ENCODE measurements at regions of chr14 and their contacts with region 1.

Region 1: DNA sequence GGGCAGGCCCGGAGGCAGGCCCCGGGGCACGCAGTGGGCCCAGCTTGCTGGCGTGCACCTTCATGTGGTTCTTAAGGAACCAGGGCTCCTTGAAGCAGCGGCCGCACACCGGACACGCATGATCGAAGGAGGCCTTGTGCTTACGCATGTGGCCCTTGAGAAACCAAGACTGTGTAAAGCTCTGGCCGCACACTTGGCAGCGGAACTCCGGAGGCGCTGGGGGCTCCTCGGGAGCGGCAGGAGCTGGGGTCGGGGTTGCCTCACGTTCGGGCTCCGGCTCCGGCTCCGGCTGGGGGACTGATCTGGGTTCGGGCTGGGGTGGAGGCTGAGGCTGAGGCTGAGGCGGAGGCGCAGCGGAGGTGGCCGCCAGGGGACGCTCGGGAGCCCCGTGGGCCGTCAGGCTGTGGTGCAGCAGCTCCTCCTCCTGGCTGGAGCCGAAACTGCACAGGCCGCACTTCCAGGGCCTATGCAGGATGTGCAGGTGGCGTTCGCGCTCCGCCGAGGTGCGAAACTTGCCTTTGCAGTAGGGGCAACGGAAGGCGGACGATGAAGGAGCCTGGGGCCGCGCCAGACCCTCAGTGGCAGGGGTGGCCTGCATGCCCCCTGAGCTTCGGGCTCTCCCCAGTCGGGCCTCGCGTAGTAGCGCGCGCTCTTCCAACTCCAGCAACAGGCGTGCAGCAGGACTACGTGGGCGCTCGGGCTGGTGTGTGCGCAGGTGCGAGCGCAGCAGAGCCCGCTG is 6.0 kb downstream of the ZNF219 start:
- DNase-seq: peak; percentile 92
- H3K4me3 Mint-ChIP-seq: no peak overlapping the region
- H3K27ac Mint-ChIP-seq: peak overlapping the region; percentile 54
- H3K4me1 Mint-ChIP-seq: peaks cover 19% of the 10 kb centered on the region
- H3K27me3 Mint-ChIP-seq: peaks cover 44% of the 10 kb centered on the region

Region 2: DNA sequence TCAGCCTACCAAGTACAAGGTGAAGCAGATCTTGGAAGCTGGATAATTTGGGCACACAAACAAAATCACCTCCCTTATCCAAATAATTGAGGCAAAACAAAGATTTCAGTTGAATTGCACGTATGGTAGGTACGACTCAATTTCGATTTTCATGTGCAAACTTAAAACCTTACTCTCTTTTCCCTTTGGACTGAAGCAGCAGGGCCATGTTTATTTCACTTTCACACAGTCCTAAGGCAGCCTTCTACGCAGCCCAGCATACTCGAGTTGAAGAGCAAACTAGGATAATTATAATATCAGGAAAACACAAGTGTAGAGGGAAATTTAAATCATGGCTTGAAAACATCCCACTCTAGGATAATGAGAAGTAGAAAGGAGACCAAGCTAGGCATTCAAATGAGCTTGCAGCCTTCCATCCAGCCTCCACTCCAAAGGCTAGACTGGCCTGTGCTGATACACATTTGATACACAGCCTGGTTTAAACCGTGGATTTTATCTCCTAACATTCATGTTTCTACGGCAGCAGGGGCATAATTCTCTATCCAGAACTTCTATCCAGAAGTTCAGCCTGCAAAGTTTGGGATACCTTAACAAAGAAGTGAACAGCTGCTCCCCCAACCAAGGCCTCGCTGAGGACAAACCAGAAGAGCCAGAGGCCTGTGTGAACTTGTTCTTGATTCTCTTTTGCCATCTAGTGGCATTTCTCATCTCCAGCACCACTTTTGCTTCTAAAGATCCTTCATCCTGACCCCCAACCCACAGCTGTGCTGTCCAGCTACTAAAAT is 52.7 kb before region 1 on chr14:
- CTCF ChIA-PET with region 1: interaction called, 10 read pairs
- DNase-seq: peak; percentile 36
- H3K4me3 Mint-ChIP-seq: no peak overlapping the region
- H3K27ac Mint-ChIP-seq: no peak overlapping the region
- H3K4me1 Mint-ChIP-seq: peaks cover 2% of the 10 kb centered on the region
- H3K27me3 Mint-ChIP-seq: peaks cover 56% of the 10 kb centered on the region

Region 3: DNA sequence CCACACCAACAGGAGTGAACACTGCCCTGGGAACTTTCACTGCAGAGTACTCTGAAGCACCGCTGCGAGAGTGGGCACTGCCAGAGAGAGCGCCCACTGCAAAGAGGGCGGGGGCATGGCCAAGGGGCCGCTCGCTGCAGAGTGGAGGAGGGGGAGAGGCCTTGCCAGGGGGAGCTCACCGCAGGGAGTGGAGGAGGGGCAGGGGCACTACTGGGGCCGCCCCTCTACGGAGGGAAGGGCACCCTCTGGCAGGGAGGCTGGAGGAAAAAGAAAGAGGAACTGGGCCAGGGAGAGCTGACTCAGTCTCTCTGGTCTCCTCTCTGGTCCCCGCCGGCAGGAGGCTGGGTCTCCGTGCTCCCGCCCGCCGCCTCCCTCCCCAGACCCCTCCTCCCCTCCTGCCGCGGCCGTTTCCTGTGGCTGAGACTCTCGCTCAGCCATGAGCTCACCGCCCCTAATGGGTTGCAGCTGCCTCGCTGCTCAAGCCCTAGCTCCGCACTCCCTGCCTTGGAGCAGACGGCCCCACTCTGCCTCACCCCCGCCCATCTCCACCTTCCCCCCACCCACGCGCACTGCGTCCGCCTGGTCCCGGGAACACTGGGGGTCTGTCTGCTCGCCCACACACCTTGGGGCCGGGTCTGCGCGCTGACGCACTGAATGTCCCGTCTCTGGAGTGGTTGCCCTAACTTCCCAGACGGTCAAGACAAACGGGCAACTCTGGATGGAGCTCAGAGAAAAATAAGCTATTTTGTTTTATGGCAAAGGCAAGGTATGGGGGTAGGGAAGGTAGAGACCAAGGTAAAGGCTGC is 21.0 kb before region 1 on chr14:
- CTCF ChIA-PET with region 1: interaction called, 72 read pairs
- DNase-seq: peak; percentile 62
- H3K4me3 Mint-ChIP-seq: peak overlapping the region; percentile 42
- H3K27ac Mint-ChIP-seq: no peak overlapping the region
- H3K4me1 Mint-ChIP-seq: peaks cover 34% of the 10 kb centered on the region
- H3K27me3 Mint-ChIP-seq: peaks cover 93% of the 10 kb centered on the region

Region 4: DNA sequence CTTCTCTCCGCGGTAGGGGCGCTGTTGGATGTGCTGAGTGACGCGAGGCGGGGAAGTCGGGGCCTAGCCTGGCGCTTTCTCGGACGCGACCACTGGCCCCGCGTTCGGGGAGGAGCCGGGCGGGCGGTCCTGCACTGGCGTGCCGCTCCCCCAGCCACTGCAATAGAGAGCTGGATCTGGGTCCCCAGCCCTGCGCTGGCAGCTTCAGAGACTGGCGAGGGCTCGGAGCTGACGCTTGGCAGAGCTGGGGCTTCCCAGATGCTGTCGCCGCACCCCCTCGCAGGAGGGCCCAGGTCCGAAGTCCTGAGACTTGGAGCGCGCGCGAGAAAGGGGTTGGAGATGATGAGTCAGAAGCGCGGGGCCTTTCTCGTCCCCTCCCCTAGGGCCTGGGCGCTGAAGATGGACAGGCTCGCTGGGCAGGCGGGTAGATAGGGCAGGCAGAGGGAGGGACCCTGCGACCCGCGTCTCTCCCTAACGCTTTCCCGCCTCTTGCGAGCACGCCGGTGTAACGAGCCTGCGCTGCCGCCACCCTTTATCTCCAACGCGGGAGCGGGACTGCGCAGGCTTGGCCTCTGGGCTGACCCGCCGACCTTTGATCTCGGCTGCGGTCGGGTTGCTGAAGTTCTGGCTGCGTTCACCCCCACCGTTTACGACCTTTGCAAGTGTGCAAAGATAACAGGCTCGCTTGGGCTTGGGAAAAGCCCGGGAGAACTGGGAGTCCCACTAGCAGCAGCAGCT is 11.4 kb after region 1 on chr14:
- CTCF ChIA-PET with region 1: interaction called, 167 read pairs
- DNase-seq: peak; percentile 97
- H3K4me3 Mint-ChIP-seq: peak overlapping the region; percentile 90
- H3K27ac Mint-ChIP-seq: peak overlapping the region; percentile 81
- H3K4me1 Mint-ChIP-seq: peaks cover 39% of the 10 kb centered on the region
- H3K27me3 Mint-ChIP-seq: peaks cover 32% of the 10 kb centered on the region

Region 5: GRCh38 chr14:21109377-21110260 is 17.2 kb after region 1 on chr14:
- CTCF ChIA-PET with region 1: interaction called, 167 read pairs
- DNase-seq: no peak
- H3K4me3 Mint-ChIP-seq: no peak overlapping the region
- H3K27ac Mint-ChIP-seq: no peak overlapping the region
- H3K4me1 Mint-ChIP-seq: peaks cover 12% of the 10 kb centered on the region
- H3K27me3 Mint-ChIP-seq: peaks cover 4% of the 10 kb centered on the region

Region 6: GRCh38 chr14:21136024-21136423 is 43.6 kb after region 1 on chr14:
- CTCF ChIA-PET with region 1: no interaction called
- DNase-seq: no peak
- H3K4me3 Mint-ChIP-seq: no peak overlapping the region
- H3K27ac Mint-ChIP-seq: no peak overlapping the region
- H3K4me1 Mint-ChIP-seq: no peaks in the 10 kb centered on the region
- H3K27me3 Mint-ChIP-seq: no peaks in the 10 kb centered on the region

Region 7: DNA sequence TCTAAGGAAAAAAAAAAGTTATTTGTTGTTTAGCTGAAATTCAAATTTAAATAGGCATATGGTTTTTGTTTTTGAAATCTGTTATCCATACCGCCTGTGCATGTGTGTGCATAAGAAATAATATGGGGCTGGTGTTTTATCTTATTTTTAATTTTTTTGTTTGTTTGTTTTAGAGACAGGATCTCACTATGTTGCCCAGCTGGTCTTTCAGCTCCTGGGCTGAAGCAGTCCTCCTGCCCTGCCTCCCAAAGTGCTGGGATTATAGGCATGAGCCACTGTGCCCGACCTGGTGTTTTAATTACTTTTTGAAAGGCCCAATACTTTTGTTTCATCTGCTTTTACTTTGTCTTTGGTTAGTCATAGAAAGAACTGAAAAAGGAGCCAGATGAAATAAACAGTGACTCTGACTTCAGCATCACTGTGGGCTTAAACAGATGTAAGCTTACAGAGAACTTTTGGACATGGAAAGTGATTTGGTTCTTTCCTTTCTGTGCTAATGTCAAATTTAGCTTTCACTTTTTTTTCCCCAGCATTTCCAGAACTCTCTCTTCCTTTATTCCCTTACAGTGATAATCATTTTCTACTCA is 254.2 kb after region 1 on chr14:
- CTCF ChIA-PET with region 1: no interaction called
- DNase-seq: no peak
- H3K4me3 Mint-ChIP-seq: no peak overlapping the region
- H3K27ac Mint-ChIP-seq: no peak overlapping the region
- H3K4me1 Mint-ChIP-seq: peaks cover 12% of the 10 kb centered on the region
- H3K27me3 Mint-ChIP-seq: peaks cover 21% of the 10 kb centered on the region